Activated B cell treated with CpG ODN at 0.5 μM for 24 hours (primary cell): ENCODE measurements at regions of chr7 and their contacts with region 1.

Region 1: GRCh38 chr7:127585044-127585953 is at the start of gene GCC1:
- DNase-seq: peak; percentile 98
- ATAC-seq: peak; percentile 78
- H3K4me3 Mint-ChIP-seq: peak within 1 kb of the TSS; percentile 89
- H3K27ac Mint-ChIP-seq: peak within 1 kb of the TSS; percentile 79
- H3K4me1 Mint-ChIP-seq: peaks cover 76% of the 10 kb centered on the region
- H3K27me3 Mint-ChIP-seq: no peaks in the 10 kb centered on the region
- CTCF ChIP-seq: no peak
- total RNA-seq, gene GCC1: 22.5 and 23.3 TPM in 2 replicates

Region 2: GRCh38 chr7:127514499-127514898 is 70.8 kb before region 1 on chr7:
- CTCF ChIA-PET with region 1: no interaction called
- POLR2A ChIA-PET with region 1: no interaction called
- intact Hi-C with region 1: no loop called
- DNase-seq: no peak
- ATAC-seq: no peak
- H3K4me3 Mint-ChIP-seq: no peak overlapping the region
- H3K27ac Mint-ChIP-seq: no peak overlapping the region
- H3K4me1 Mint-ChIP-seq: no peaks in the 10 kb centered on the region
- H3K27me3 Mint-ChIP-seq: peaks cover 21% of the 10 kb centered on the region
- CTCF ChIP-seq: no peak

Region 3: DNA sequence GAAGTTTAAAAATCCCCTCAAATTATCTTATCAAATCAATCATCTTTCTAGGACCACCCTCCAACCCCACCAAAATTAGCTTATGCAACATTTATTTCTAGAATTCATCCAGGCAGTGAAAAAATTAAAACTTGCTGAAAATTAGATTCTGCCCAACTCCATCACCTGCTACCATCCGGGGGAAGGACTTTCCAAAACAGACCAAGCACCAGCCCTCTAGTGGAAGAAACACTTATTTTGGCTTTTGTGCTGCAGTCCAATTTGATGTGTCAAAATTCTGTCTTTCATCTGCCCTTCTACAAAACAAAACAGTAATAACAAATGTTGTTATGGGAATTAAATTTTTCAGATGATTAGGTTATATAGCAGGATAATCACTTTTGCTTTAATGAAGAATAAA is 35.1 kb before region 1 on chr7:
- CTCF ChIA-PET with region 1: no interaction called
- POLR2A ChIA-PET with region 1: no interaction called
- intact Hi-C with region 1: no loop called
- DNase-seq: no peak
- ATAC-seq: no peak
- H3K4me3 Mint-ChIP-seq: no peak overlapping the region
- H3K27ac Mint-ChIP-seq: no peak overlapping the region
- H3K4me1 Mint-ChIP-seq: no peaks in the 10 kb centered on the region
- H3K27me3 Mint-ChIP-seq: peaks cover 2% of the 10 kb centered on the region
- CTCF ChIP-seq: no peak

Region 4: DNA sequence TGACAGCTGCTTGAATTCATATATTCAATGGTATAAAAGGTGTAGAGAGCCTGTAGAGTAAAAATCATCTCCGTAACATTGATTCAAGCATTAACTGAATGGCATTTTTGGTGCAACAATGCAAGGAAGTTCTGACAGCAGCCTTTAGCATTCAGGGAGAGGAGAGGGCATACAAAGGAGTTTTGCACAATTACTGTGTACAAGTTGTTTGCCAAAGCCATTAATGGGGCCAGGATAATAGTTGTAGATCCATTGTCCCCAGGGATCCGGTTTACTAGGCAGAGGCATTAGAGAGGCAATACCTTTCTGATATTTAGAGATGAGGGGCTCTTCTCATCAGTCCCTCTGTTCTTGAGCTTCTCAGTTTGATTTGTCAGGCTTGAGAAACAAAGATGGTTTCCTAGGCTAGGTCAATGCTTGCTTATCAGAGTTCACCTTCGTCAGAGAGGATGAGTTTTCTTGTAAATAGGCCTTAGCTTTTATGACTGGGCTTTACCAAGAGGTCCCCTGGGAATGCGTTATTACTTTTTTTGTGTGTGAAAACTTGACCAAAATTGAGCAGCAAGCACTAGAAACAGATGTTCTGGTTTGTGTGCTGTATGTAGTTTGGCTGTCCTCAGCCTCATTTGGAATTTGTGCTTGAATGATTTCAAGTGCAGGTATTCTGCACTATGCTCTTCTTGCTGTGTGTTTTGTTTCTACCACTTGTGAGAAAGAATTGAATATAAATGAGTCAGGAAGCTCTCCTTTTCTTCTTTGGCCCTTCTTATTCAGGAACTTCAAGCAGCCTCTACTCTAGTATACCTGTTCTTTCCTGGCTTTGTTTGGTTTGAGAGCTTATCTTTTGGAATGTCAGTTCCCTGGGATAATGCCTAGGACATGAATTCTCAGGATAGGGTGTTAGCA is 98.7 kb after region 1 on chr7:
- CTCF ChIA-PET with region 1: no interaction called
- POLR2A ChIA-PET with region 1: no interaction called
- intact Hi-C with region 1: loop called (anchors 1 kb)
- DNase-seq: no peak
- ATAC-seq: peak; percentile 18
- H3K4me3 Mint-ChIP-seq: no peak overlapping the region
- H3K27ac Mint-ChIP-seq: no peak overlapping the region
- H3K4me1 Mint-ChIP-seq: peaks cover 42% of the 10 kb centered on the region
- H3K27me3 Mint-ChIP-seq: no peaks in the 10 kb centered on the region
- CTCF ChIP-seq: no peak